ENCODE measurements at regions of chr11 and their contacts with region 1.

Region 1: DNA sequence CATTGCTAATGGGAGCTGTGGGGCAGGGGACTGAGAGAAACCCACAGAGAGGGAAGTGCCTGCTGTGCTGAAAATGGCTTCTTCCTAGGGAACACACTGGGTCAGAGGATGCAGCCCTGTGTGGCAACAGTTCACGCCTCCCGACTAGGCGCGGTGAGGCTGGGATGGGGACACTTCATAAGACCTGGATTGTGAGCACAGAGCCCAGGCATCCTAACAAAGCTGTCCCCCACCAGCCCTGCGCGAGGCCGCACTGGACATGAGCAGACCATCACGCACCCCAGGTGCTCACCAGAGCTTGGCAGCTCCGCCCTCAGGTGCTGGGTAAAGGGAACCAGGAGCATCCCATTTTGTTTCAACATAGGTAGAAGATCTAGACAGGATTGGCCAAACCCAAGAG is 1.8 kb upstream of the KRTAP5-4 start:
- DNase-seq: no peak
- H3K4me3 Mint-ChIP-seq: no peak overlapping the region
- H3K27ac Mint-ChIP-seq: no peak overlapping the region
- H3K4me1 Mint-ChIP-seq: no peaks in the 10 kb centered on the region
- H3K27me3 Mint-ChIP-seq: peaks cover 68% of the 10 kb centered on the region
- CTCF ChIP-seq: no peak

Region 2: GRCh38 chr11:1640076-1640946 is 16.6 kb after region 1 on chr11:
- CTCF ChIA-PET with region 1: interaction called, 10 read pairs
- POLR2A ChIA-PET with region 1: no interaction called
- intact Hi-C with region 1: no loop called
- DNase-seq: peak; percentile 49
- H3K4me3 Mint-ChIP-seq: no peak overlapping the region
- H3K27ac Mint-ChIP-seq: no peak overlapping the region
- H3K4me1 Mint-ChIP-seq: no peaks in the 10 kb centered on the region
- H3K27me3 Mint-ChIP-seq: peaks cover 61% of the 10 kb centered on the region
- CTCF ChIP-seq: peak; percentile 92

Region 3: DNA sequence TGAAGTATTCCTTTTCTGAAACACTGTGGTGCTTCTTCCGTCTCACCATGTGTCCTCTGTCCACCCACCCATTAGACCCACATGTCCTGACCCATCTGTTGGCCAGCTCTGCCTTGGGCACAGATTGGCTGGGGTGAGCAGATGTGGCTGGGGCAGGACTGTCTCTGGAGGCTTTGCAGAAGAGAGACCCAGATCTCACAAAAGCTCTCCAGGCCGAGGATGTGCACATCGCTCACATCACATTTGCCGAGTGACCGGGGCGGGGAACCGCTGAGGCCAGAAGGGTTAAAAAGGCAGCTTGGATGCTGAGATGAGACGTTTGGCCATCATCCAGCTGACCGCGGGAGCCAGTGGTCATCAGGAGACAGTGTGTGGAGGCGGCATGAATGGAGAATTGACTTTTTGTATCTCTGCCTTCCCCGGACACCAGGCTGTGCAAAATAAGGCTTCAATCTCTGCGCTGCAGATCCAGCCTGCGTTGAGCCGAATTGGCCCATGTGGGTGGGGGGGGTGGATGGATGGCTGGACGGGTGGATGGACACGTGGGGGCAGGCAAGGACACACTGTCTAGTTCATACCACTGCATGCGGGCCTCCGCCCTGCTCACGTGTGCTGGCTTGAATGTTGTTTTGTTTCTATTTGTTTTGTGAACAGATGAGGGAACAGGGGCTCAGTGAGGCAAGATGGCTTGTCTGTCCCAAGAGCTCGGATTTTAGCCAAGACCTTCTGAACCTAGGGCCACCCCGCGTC is 120.6 kb after region 1 on chr11:
- CTCF ChIA-PET with region 1: no interaction called
- POLR2A ChIA-PET with region 1: no interaction called
- intact Hi-C with region 1: no loop called
- DNase-seq: no peak
- H3K4me3 Mint-ChIP-seq: no peak overlapping the region
- H3K27ac Mint-ChIP-seq: no peak overlapping the region
- H3K4me1 Mint-ChIP-seq: peaks cover 6% of the 10 kb centered on the region
- H3K27me3 Mint-ChIP-seq: peaks cover 7% of the 10 kb centered on the region
- CTCF ChIP-seq: no peak

Measured in MCF 10A (cell line).